AG04450 (cell line): ENCODE measurements at regions of chr2 and their contacts with region 1.

Region 1: DNA sequence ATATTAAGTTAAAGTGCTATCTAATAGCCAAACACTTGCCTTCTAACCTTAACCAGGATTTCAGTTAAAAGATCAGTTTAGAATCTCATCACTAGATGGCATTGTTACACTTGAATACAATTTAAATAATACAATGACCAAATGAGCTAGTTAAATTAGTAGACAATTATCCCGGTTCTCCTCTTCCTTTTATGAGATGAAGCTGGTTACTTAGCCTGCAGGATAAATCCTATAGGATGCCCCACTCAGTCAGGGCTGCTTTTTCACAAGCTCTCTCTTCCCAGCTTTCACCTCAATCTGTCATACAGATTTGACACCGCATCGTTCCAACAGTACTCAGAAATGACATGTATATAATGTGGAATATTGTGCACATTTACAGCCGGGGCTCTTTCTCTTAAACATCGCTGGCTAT is 678.8 kb downstream of the KCNJ3 start:
- DNase-seq: no peak
- H3K4me3 ChIP-seq: no peak overlapping the region
- H3K27ac ChIP-seq: no peak overlapping the region
- H3K27me3 ChIP-seq: no peaks in the 10 kb centered on the region
- CTCF ChIP-seq: 0 out of 2 replicates have a peak, but pooled peaks have one; percentile 33

Region 2: GRCh38 chr2:156589381-156590079 is 1212.3 kb after region 1 on chr2:
- CTCF ChIA-PET with region 1: interaction called, 27 read pairs
- POLR2A ChIA-PET with region 1: no interaction called
- DNase-seq: peak; percentile 11
- H3K4me3 ChIP-seq: no peak overlapping the region
- H3K27ac ChIP-seq: no peak overlapping the region
- H3K27me3 ChIP-seq: no peaks in the 10 kb centered on the region
- CTCF ChIP-seq: peak; percentile 68

Region 3: GRCh38 chr2:157182834-157183396 is 1805.6 kb after region 1 on chr2:
- CTCF ChIA-PET with region 1: interaction called, 10 read pairs
- POLR2A ChIA-PET with region 1: no interaction called
- DNase-seq: peak; percentile 85
- H3K4me3 ChIP-seq: no peak overlapping the region
- H3K27ac ChIP-seq: peak overlapping the region; percentile 92
- H3K27me3 ChIP-seq: no peaks in the 10 kb centered on the region
- CTCF ChIP-seq: no peak

Region 4: GRCh38 chr2:157327621-157328500 is 1950.6 kb after region 1 on chr2:
- CTCF ChIA-PET with region 1: interaction called, 14 read pairs
- POLR2A ChIA-PET with region 1: no interaction called
- DNase-seq: peak; percentile 53
- H3K4me3 ChIP-seq: no peak overlapping the region
- H3K27ac ChIP-seq: no peak overlapping the region
- H3K27me3 ChIP-seq: no peaks in the 10 kb centered on the region
- CTCF ChIP-seq: peak; percentile 97